ENCODE measurements at regions of chr11 and their contacts with region 1.

Region 1: DNA sequence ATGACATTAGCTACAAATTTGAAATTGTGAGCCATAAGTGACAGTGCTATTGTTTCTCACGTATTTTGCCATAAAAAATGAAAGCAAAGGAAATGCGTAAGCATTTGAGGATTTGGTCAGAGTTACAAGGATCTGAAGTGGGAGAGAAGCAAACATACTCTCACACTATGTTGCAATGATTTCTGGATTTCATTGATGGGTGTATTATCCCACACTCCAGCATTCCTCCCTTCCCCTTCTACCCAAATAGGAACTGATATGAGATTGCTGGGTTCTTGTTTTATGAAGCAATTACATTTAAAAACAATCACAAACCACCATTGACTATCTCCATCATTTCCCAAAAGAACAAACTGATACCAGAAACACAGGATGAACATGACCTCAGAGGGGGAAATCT is 314.0 kb upstream of the CTSC start:
- DNase-seq: no peak
- ATAC-seq: no peak
- H3K4me3 ChIP-seq: no peak overlapping the region
- H3K4me3 Mint-ChIP-seq: no peak overlapping the region
- H3K27ac ChIP-seq: no peak overlapping the region
- H3K27ac Mint-ChIP-seq: no peak overlapping the region
- H3K4me1 ChIP-seq: no peaks in the 10 kb centered on the region
- H3K4me1 Mint-ChIP-seq: no peaks in the 10 kb centered on the region
- H3K27me3 ChIP-seq: no peaks in the 10 kb centered on the region
- H3K27me3 Mint-ChIP-seq: no peaks in the 10 kb centered on the region
- CTCF ChIP-seq: no peak

Region 2: GRCh38 chr11:88666364-88666763 is 14.8 kb after region 1 on chr11:
- CTCF ChIA-PET with region 1: interaction called, 3 read pairs
- POLR2A ChIA-PET with region 1: no interaction called
- intact Hi-C with region 1: loop called in 1 of 2 experiments (anchors 1 kb)
- DNase-seq: no peak
- ATAC-seq: no peak
- H3K4me3 ChIP-seq: no peak overlapping the region
- H3K4me3 Mint-ChIP-seq: no peak overlapping the region
- H3K27ac ChIP-seq: no peak overlapping the region
- H3K27ac Mint-ChIP-seq: no peak overlapping the region
- H3K4me1 ChIP-seq: no peaks in the 10 kb centered on the region
- H3K4me1 Mint-ChIP-seq: no peaks in the 10 kb centered on the region
- H3K27me3 ChIP-seq: no peaks in the 10 kb centered on the region
- H3K27me3 Mint-ChIP-seq: no peaks in the 10 kb centered on the region
- CTCF ChIP-seq: no peak

Region 3: DNA sequence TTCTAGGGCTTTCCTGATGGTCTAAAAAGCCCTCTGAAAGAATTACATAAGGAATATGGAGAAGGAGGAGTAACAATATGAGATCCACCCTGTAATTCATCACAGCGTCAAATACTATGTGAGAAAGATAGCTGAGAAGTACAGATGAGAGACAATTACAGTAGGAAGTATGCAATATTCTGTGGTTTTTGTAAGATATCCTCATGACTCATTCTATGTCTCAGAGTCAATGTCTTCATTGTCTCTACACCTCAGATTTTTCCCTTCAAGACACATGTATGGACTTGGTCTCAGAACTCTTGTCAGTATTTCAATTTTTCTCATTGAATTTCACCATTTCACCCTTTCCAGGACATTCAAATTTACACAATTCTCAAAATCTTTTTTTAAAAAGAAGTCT is 29.2 kb after region 1 on chr11:
- CTCF ChIA-PET with region 1: no interaction called
- POLR2A ChIA-PET with region 1: no interaction called
- intact Hi-C with region 1: no loop called
- DNase-seq: no peak
- ATAC-seq: no peak
- H3K4me3 ChIP-seq: no peak overlapping the region
- H3K4me3 Mint-ChIP-seq: no peak overlapping the region
- H3K27ac ChIP-seq: no peak overlapping the region
- H3K27ac Mint-ChIP-seq: no peak overlapping the region
- H3K4me1 ChIP-seq: no peaks in the 10 kb centered on the region
- H3K4me1 Mint-ChIP-seq: peaks cover 6% of the 10 kb centered on the region
- H3K27me3 ChIP-seq: no peaks in the 10 kb centered on the region
- H3K27me3 Mint-ChIP-seq: no peaks in the 10 kb centered on the region
- CTCF ChIP-seq: no peak